Endothelial cell of umbilical vein (primary cell): ENCODE measurements at regions of chr3 and their contacts with region 1.

Region 1: DNA sequence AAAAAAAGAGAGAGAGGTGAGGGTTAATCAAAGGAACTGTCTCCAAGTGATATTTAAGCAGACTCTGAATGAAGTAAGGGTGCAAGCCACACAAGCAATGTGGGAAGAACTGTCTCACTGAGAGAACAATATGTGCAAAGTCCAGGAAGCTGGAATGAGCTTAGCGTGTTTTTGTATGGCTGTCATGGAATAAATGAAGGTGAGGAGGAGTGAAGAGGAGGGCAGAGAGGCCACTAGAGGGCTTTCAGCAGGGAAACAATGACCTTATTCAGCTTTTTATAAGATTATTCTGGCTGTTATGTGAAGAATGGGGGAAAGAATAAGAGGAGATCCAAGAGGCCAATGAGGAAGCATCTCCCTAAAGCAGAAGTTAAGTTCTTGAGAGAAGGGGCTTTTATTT is 86.9 kb upstream of the COL8A1 start:
- DNase-seq: no peak
- H3K4me3 ChIP-seq: no peak overlapping the region
- H3K27ac ChIP-seq: no peak overlapping the region
- H3K4me1 ChIP-seq: peaks cover 39% of the 10 kb centered on the region
- H3K27me3 ChIP-seq: no peaks in the 10 kb centered on the region
- CTCF ChIP-seq: peak in 1 of 2 donors; percentile 4
- POLR2A ChIP-seq: no peak

Region 2: GRCh38 chr3:98843266-98843959 is 708.1 kb before region 1 on chr3:
- CTCF ChIA-PET with region 1: no interaction called
- POLR2A ChIA-PET with region 1: no interaction called
- dilution Hi-C with region 1: no loop called
- intact Hi-C with region 1: no loop called
- DNase-seq: no peak
- H3K4me3 ChIP-seq: no peak overlapping the region
- H3K27ac ChIP-seq: no peak overlapping the region
- H3K4me1 ChIP-seq: no peaks in the 10 kb centered on the region
- H3K27me3 ChIP-seq: no peaks in the 10 kb centered on the region
- CTCF ChIP-seq: no peak
- POLR2A ChIP-seq: no peak

Region 3: DNA sequence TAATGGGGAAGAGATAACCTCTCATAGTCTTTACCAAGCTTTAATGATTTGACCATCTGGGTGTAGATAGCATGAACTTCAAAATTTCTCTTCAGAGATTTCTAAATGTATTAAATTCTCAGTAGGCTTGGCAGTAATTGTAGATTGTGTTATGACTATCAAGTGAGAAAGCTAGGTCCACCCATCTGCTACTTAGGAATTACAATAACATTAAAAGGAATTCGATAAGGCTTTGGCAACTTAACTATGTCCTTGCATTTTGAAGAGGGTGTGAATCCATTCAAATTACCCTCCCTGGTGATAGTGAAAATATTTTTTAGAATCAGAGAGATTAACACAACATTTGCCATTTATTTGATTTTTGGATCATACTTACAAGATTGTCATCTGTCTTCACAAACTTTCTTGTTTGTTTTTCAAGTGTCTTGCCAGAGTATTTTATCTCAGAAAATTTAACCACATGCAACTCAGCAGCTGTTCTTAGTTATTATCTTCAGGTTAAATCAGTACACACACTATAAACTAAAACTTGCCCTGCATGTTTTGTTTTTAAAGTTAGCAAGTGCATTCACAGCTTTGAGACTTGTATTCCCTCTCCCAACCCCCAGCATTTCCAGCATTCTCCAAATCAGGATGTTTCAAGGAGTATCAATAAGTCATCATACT is 17.3 kb after region 1 on chr3:
- CTCF ChIA-PET with region 1: interaction called, 14 read pairs
- POLR2A ChIA-PET with region 1: no interaction called
- dilution Hi-C with region 1: no loop called
- intact Hi-C with region 1: no loop called
- DNase-seq: peak; percentile 29
- H3K4me3 ChIP-seq: no peak overlapping the region
- H3K27ac ChIP-seq: no peak overlapping the region
- H3K4me1 ChIP-seq: no peaks in the 10 kb centered on the region
- H3K27me3 ChIP-seq: no peaks in the 10 kb centered on the region
- CTCF ChIP-seq: no peak
- POLR2A ChIP-seq: no peak

Region 4: DNA sequence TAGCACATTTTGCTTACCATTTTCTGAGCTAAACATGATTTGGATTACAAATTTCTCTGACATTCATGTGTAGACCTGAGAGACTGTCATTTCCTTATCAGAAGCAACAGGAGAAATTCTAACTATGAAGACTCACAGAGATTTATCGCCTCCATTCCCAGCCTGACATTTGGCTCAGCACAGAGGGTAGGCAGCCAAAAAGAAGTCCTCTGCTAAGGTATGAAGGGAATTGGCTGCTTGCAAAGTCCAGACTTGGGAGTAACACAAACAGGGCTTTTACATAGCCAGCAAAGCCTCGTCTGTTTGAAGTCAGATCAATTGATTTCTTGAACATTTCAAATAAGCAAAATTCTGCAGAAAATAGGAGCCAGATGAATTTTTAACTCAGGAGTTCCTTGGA is 209.1 kb after region 1 on chr3:
- CTCF ChIA-PET with region 1: no interaction called
- POLR2A ChIA-PET with region 1: no interaction called
- dilution Hi-C with region 1: no loop called
- intact Hi-C with region 1: no loop called
- DNase-seq: no peak
- H3K4me3 ChIP-seq: no peak overlapping the region
- H3K27ac ChIP-seq: no peak overlapping the region
- H3K4me1 ChIP-seq: peaks cover 2% of the 10 kb centered on the region
- H3K27me3 ChIP-seq: no peaks in the 10 kb centered on the region
- CTCF ChIP-seq: no peak
- POLR2A ChIP-seq: no peak

Region 5: GRCh38 chr3:100226712-100227429 is 675.4 kb after region 1 on chr3:
- CTCF ChIA-PET with region 1: no interaction called
- POLR2A ChIA-PET with region 1: no interaction called
- dilution Hi-C with region 1: no loop called
- intact Hi-C with region 1: no loop called
- DNase-seq: no peak
- H3K4me3 ChIP-seq: no peak overlapping the region
- H3K27ac ChIP-seq: no peak overlapping the region
- H3K4me1 ChIP-seq: no peaks in the 10 kb centered on the region
- H3K27me3 ChIP-seq: no peaks in the 10 kb centered on the region
- CTCF ChIP-seq: no peak
- POLR2A ChIP-seq: no peak